ENCODE measurements at regions of chr2 and their contacts with region 1.

Region 1: GRCh38 chr2:99489761-99490622 is at the start of gene REV1:
- DNase-seq: peak; percentile 81 to 86
- ATAC-seq: peak; percentile 91 to 92
- H3K4me3 ChIP-seq: peak within 1 kb of the TSS; percentile 74 to 97 (median 88)
- H3K27ac ChIP-seq: peak within 1 kb of the TSS; percentile 93 to 99 (median 94)
- H3K4me1 ChIP-seq: peaks cover 21 to 25% of the 10 kb centered on the region in 2 donors
- H3K27me3 ChIP-seq: no peaks in the 10 kb centered on the region
- CTCF ChIP-seq: peak; percentile 85 to 96 (median 94)
- POLR2A ChIP-seq: peak; percentile 65 to 75
- total RNA-seq, gene REV1: 13.5 to 35.1 (median 17.8) TPM

Region 2: DNA sequence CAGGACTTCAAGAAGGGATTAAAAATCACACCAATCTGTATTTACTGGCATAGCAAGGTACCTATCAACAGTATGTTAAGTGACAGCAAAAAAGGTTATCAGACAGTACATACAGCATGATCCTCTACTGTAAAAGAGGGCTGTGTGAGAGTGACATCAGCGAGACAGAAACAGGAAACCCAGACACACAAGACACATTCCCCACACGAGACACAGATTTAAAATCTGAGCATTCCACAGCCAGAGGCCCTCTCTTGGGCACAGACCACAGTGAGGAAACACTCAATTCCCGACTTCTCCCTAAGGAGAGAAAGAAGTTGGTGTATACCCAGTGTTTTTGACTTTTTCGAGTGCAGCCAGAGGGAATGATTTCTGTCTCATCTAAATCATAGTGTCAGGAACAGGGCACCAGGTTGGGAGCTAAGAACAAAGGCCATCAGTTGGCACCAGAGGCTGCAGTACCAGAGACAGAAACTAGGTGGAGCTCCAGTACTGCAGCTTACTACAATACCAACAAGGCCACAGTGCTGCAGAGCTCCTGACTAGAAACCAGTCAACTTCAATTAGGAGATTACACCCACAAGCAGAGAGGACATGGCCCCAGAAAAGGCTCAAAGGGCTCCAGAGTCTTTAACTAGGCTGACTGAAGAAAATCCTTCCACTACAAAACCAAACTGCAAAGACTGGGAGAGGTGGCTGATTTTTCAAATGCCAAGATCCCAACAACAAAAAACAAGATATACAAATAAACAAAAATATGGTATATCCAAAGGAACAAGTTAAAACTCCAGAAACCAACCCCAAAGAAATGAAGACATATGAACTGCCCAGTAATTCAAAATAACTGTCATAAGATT is 840.6 kb before region 1 on chr2:
- in situ Hi-C with region 1: loop called in 1 of 4 experiments (anchors 25 kb)
- intact Hi-C with region 1: no loop called
- DNase-seq: peak; percentile 39 to 69
- ATAC-seq: peak; percentile 93 to 94
- H3K4me3 ChIP-seq: no peak overlapping the region
- H3K27ac ChIP-seq: no peak overlapping the region
- H3K4me1 ChIP-seq: no peaks in the 10 kb centered on the region
- H3K27me3 ChIP-seq: no peaks in the 10 kb centered on the region
- CTCF ChIP-seq: peak; percentile 94 to 99 (median 96)
- POLR2A ChIP-seq: no peak

Region 3: DNA sequence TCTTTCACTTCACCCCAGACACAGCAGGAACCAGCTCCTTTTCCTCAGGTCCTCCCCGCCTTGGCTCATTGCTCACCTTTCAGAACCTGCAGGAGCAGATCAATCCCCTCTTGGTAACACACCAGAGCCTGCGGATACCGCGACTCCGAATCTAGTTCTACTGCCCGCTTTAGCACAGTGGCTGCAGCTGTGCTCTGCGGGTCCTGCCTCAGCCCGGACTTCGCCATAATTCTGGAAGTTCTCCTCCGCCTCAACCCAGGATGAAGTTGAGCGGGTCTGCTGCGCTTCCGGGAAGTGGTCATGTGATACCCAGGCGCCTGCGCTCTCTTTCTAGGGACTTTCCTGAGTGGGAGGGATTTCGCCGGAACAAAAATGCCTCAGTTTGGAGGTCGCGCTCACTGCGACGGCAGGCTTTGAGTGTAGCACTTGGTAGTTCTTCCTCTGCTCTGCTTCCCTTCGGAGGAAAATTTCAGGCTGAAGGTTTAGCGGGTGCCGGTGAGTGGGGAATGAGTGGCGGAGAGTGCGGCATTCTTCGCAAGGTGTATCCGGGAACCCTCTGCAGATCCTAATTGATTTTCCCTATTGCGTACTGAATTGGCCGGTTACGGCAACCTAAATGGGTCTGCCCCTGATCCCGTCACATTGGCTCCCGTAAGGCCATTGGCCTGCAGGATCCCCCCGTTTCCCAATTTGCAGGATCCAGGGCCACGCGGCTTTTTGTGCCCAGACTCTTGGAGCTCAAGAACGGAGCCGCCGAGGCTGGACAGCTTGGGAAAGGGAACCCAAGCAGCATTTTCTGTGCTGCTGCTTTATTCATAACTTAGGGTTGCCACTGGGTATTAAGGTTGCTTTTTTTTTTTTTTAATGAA is 309.0 kb before region 1 on chr2 and contains the starts of genes MITD1 and MRPL30:
- in situ Hi-C with region 1: loop called (anchors 10 to 25 kb)
- intact Hi-C with region 1: loop called (anchors 2 kb)
- DNase-seq: peak; percentile 87 to 89
- ATAC-seq: peak; percentile 98 to 100
- H3K4me3 ChIP-seq: peak within 1 kb of the TSS; percentile 73 to 84 (median 80)
- H3K27ac ChIP-seq: peak within 1 kb of the TSS; percentile 77 to 88 (median 80)
- H3K4me1 ChIP-seq: peaks cover 23 to 33% of the 10 kb centered on the region in 2 donors
- H3K27me3 ChIP-seq: no peaks in the 10 kb centered on the region
- CTCF ChIP-seq: no peak
- POLR2A ChIP-seq: peak; percentile 29 to 73
- total RNA-seq, gene MITD1: 12.3 to 16.8 (median 13.2) TPM
- total RNA-seq, gene MRPL30: 29.3 to 43.4 (median 35.5) TPM

Region 4: DNA sequence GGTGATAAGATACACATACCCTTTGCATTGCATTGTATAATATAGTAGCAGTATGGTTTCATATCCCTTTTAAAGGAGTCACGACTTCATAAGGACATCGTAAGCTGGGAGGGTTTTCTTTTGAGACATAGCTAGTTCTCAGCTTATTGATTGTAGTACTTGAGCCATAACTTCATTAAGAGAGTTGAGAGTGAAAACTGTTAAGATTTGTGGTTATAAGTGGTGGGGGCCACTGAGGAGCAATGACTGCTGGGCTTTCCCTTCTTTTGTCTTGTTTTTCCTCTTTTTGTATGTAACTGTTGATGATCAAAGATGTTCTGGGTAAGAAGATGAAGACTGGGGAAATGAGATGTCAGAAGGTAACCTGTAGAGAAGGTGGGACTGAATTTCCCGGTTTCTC is 141.8 kb before region 1 on chr2:
- in situ Hi-C with region 1: loop called in 3 of 4 experiments (anchors 10 to 25 kb)
- intact Hi-C with region 1: no loop called
- DNase-seq: no peak
- ATAC-seq: no peak
- H3K4me3 ChIP-seq: no peak overlapping the region
- H3K27ac ChIP-seq: no peak overlapping the region
- H3K4me1 ChIP-seq: peaks cover 0 to 8% of the 10 kb centered on the region in 2 donors
- H3K27me3 ChIP-seq: no peaks in the 10 kb centered on the region
- CTCF ChIP-seq: no peak
- POLR2A ChIP-seq: no peak

Region 5: GRCh38 chr2:99444222-99444621 is 45.8 kb before region 1 on chr2:
- in situ Hi-C with region 1: no loop called
- intact Hi-C with region 1: loop called (anchors 1 kb)
- DNase-seq: no peak
- ATAC-seq: no peak
- H3K4me3 ChIP-seq: no peak overlapping the region
- H3K27ac ChIP-seq: no peak overlapping the region
- H3K4me1 ChIP-seq: peaks cover 4 to 17% of the 10 kb centered on the region in 2 donors
- H3K27me3 ChIP-seq: no peaks in the 10 kb centered on the region
- CTCF ChIP-seq: no peak
- POLR2A ChIP-seq: no peak

Region 6: GRCh38 chr2:99571533-99571932 is 81.5 kb after region 1 on chr2:
- in situ Hi-C with region 1: no loop called
- intact Hi-C with region 1: no loop called
- DNase-seq: no peak
- ATAC-seq: no peak
- H3K4me3 ChIP-seq: no peak overlapping the region
- H3K27ac ChIP-seq: no peak overlapping the region
- H3K4me1 ChIP-seq: peaks cover 0 to 7% of the 10 kb centered on the region in 2 donors
- H3K27me3 ChIP-seq: no peaks in the 10 kb centered on the region
- CTCF ChIP-seq: no peak
- POLR2A ChIP-seq: no peak